Dorsolateral prefrontal cortex (tissue), 120 donors: ENCODE measurements at regions of chr5 and their contacts with region 1.

Region 1: GRCh38 chr5:170225326-170226128 is 7.3 kb upstream of the C5orf58 start:
- DNase-seq: peak; percentile 62 to 92 (median 82)
- H3K4me3 ChIP-seq: no peak overlapping the region
- H3K27ac ChIP-seq: no peak overlapping the region
- H3K27me3 ChIP-seq: no peaks in the 10 kb centered on the region
- CTCF ChIP-seq: peak; percentile 67 to 93 (median 88)

Region 2: DNA sequence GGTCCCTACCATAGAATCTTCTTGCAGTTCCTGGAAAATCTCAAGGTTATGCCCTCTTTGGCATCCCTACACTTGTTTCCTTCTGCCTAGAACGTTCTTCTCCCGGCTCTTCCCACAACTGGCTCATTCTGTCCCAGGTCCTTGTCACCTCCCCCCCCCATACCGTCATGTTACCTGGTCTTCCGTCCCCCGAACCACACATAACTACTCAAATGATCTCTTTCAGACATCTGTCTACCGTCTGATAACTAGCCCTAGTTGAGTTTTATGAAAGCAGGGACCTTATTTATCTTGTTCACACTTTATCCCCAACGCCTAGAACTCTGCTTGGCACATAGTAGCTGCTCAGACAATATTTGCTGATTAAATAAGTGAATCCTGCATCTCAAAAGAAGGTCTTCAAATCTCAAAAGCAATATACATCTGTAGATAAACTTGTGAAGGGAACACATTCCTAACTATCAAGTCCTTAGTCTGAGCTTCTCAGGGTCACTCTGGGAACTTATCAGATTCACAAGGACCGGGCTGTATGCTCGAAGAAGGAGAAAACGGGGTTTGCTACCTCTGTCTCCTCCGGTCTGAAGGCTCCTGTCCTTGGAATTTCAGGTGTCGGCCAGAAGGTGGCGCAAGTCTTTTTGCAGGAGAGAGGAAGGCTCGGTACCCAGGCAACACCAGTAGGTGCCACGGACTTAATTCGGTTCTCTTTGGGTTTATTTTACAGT is 42.1 kb after region 1 on chr5:
- intact Hi-C with region 1: loop called in 1 of 2 experiments (anchors 2 kb)
- DNase-seq: peak; percentile 59 to 85 (median 76)
- H3K4me3 ChIP-seq: peak overlapping the region in 39 of 59 donors; percentile 4 to 51 (median 28)
- H3K27ac ChIP-seq: peak overlapping the region in 42 of 59 donors; percentile 2 to 92 (median 46)
- H3K27me3 ChIP-seq: peaks cover 0 to 2% (median 0%) of the 10 kb centered on the region in 45 donors
- CTCF ChIP-seq: peak; percentile 73 to 97 (median 91)

Region 3: DNA sequence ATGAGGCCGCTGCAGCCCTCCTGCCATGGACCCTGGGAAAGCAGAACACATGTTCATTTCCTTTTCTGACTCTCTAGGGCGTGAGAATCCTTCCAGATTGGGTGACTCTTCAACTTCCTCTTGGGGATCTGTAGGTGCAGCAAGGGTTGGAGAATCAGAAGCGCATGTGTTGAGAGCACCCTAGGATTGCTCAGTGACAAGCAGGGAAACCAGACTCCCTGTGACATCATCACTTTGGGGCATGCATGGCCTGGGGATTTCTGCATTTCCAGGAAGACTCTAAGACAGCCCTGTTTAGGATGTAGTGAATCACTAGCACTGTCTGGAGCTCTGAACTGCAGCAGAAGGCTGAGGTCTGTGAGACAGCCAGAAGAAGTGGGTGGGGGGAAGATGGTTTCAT is 87.1 kb after region 1 on chr5:
- intact Hi-C with region 1: loop called in 1 of 2 experiments (anchors 10 kb)
- DNase-seq: peak in 1 of 10 donors; percentile 26
- H3K4me3 ChIP-seq: no peak overlapping the region
- H3K27ac ChIP-seq: peak overlapping the region in 1 of 59 donors; percentile 27
- H3K27me3 ChIP-seq: no peaks in the 10 kb centered on the region
- CTCF ChIP-seq: no peak

Region 4: DNA sequence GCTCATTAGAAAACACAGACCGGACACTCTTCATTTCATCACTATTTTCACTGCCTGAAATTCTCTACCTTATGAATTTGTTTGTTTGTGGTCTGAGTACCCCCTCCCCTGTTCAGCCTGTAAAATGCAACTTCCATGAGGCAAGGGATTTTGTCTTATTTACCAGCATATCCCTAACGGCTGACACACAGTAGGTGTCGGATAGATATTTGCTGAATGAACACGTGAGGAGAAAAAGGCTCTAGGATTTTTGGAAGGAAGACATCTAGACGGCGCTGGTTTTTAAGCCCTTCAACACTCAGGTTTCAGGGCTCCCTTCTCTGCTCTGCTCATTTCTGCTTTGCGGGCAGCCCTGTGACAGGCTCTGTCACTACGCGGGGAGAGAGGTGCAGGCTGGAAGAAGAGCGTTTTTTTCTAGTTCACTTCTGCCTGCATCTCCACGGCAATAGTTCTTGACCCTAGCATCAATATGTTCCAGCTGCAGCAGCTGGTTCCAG is 122.7 kb after region 1 on chr5:
- intact Hi-C with region 1: loop called (anchors 2 to 5 kb)
- DNase-seq: no peak
- H3K4me3 ChIP-seq: peak overlapping the region in 6 of 59 donors; percentile 22 to 35 (median 26)
- H3K27ac ChIP-seq: no peak overlapping the region
- H3K27me3 ChIP-seq: peaks cover 0 to 20% (median 3%) of the 10 kb centered on the region in 45 donors
- CTCF ChIP-seq: peak in 53 of 56 donors; percentile 12 to 72 (median 41)

Region 5: DNA sequence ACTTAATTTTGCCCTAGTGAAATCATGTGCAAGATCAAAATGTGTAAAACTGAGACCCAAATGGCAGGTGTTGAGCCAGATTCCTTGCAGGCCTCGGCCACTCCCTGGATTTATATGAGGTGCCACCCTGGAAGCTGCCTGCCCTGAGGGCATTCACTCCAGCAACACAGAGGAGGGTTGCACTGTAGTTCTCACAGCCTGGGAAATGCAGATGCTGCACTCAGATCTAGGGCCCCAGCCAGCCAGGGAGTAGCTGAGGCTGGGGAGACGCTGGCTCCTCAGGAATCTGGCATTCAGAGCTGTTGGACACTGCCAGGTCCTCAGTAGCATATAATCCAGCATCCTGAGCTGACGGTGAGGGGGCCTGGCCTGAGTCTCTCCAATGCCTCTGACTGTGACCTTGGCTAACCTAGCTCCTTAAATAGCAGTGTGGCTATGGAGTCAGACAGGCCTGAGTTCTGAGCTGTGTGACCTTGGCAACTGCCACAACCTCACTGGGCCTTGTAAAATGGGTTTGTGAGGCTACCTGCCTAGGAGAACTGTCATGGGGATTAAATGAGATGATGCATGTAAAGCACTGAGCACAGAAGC is 154.9 kb after region 1 on chr5:
- intact Hi-C with region 1: no loop called
- DNase-seq: no peak
- H3K4me3 ChIP-seq: no peak overlapping the region
- H3K27ac ChIP-seq: no peak overlapping the region
- H3K27me3 ChIP-seq: peaks cover 0 to 3% (median 0%) of the 10 kb centered on the region in 45 donors
- CTCF ChIP-seq: no peak

Region 6: GRCh38 chr5:170420780-170421412 is 195.4 kb after region 1 on chr5:
- intact Hi-C with region 1: loop called (anchors 1 to 5 kb)
- DNase-seq: peak in 5 of 10 donors; percentile 40 to 67 (median 59)
- H3K4me3 ChIP-seq: no peak overlapping the region
- H3K27ac ChIP-seq: peak overlapping the region in 1 of 59 donors; percentile 10
- H3K27me3 ChIP-seq: peaks cover 0 to 5% (median 0%) of the 10 kb centered on the region in 45 donors
- CTCF ChIP-seq: peak; percentile 71 to 91 (median 81)

Region 7: GRCh38 chr5:170623576-170624181 is 398.2 kb after region 1 on chr5:
- intact Hi-C with region 1: loop called in 1 of 2 experiments (anchors 5 kb)
- DNase-seq: peak in 7 of 10 donors; percentile 31 to 66 (median 47)
- H3K4me3 ChIP-seq: no peak overlapping the region
- H3K27ac ChIP-seq: no peak overlapping the region
- H3K27me3 ChIP-seq: no peaks in the 10 kb centered on the region
- CTCF ChIP-seq: peak in 53 of 56 donors; percentile 43 to 78 (median 65)

Region 8: GRCh38 chr5:170633235-170634081 is 407.9 kb after region 1 on chr5:
- intact Hi-C with region 1: loop called (anchors 5 kb)
- DNase-seq: peak in 1 of 10 donors; percentile 26
- H3K4me3 ChIP-seq: peak overlapping the region in 54 of 59 donors; percentile 0 to 59 (median 36)
- H3K27ac ChIP-seq: peak overlapping the region in 42 of 59 donors; percentile 5 to 81 (median 51)
- H3K27me3 ChIP-seq: peaks cover 0 to 4% (median 0%) of the 10 kb centered on the region in 45 donors
- CTCF ChIP-seq: peak in 29 of 56 donors; percentile 1 to 99 (median 23)

Region 9: GRCh38 chr5:170648541-170648940 is 423.0 kb after region 1 on chr5:
- intact Hi-C with region 1: no loop called
- DNase-seq: no peak
- H3K4me3 ChIP-seq: no peak overlapping the region
- H3K27ac ChIP-seq: no peak overlapping the region
- H3K27me3 ChIP-seq: peaks cover 0 to 11% (median 0%) of the 10 kb centered on the region in 45 donors
- CTCF ChIP-seq: no peak